Sciatic nerve (tissue), 2 donors: ENCODE measurements at regions of chr22 and their contacts with region 1.

Region 1: DNA sequence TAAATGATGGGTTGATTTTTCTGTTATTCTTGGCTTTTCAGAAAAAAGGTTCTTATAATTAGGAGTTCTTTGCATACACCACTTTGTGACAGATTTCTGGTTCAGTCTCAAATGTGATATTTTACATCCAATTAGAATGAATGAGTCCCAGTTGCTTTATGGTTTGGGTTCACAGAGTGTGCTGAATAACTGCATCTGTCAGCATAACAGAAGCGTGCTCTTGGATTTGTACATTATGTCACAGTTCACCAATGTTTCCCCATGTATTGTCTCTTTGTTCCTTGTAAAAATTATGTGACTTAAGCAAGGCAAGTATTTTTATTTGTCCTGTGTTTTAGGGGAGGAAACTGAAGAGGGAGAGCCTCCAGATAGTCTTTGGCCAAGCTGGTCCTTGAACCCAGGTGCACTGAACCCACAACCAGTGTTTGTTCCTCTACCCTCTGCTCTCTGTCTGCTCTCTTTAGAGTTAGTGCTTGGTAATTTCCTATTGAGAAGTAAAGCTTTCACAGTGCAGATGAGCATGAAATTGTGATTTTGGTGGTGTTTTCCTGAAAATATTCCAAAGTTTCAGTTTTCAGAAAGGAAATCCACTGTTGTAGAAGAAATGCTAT is 107.5 kb downstream of the TBC1D22A start:
- DNase-seq: no peak
- ATAC-seq: peak; percentile 49

Region 2: DNA sequence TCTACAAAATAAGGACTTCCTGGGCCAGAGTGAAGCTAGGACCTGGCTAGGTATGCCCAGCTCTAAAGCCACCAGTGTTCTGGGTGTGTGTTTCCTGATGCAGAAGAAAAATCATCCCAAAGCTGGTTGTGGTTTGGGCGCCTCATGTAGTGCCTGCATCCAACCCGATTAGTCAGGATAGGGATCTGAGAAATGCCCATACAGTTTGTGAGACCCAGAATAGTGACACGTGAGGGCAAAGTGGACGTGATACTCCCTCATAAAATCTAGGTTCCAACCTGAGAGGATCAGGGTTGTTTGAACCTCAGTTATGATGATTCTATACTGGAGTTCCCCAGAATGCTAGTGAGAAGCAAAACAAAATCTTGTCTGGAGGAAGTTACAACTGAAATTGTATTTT is 131.0 kb after region 1 on chr22:
- intact Hi-C with region 1: no loop called
- DNase-seq: no peak
- ATAC-seq: no peak

Region 3: DNA sequence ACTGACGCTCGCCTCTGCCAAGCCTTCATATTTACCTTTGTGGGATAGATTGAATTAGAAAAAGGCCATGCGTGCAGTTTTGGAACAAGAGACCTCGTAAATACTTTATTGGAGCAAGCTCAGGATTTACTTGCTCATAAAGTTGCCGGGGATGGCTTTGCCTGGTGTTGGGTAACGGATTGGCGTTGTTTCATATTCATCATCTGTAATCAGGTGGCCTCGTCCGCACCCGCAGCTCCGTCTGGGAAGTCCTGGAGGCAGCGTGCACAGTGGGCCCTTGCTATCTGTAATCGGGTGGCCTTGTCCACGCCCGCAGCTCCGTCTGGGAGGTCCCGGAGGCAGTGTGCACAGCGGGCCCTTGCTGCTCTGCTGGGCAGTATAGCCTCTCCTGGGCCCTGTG is 1748.4 kb after region 1 on chr22:
- intact Hi-C with region 1: loop called (anchors 5 kb)
- DNase-seq: no peak
- ATAC-seq: no peak